ENCODE measurements at regions of chr17 and their contacts with region 1.

Region 1: GRCh38 chr17:79231766-79232287 is 157.2 kb downstream of the ENGASE start:
- DNase-seq: no peak
- ATAC-seq: no peak
- H3K4me3 ChIP-seq: no peak overlapping the region
- H3K27ac ChIP-seq: no peak overlapping the region
- H3K4me1 ChIP-seq: no peaks in the 10 kb centered on the region
- H3K27me3 ChIP-seq: peaks cover 4% of the 10 kb centered on the region; the same call in 1 of the 2 replicates
- CTCF ChIP-seq: no peak

Region 2: DNA sequence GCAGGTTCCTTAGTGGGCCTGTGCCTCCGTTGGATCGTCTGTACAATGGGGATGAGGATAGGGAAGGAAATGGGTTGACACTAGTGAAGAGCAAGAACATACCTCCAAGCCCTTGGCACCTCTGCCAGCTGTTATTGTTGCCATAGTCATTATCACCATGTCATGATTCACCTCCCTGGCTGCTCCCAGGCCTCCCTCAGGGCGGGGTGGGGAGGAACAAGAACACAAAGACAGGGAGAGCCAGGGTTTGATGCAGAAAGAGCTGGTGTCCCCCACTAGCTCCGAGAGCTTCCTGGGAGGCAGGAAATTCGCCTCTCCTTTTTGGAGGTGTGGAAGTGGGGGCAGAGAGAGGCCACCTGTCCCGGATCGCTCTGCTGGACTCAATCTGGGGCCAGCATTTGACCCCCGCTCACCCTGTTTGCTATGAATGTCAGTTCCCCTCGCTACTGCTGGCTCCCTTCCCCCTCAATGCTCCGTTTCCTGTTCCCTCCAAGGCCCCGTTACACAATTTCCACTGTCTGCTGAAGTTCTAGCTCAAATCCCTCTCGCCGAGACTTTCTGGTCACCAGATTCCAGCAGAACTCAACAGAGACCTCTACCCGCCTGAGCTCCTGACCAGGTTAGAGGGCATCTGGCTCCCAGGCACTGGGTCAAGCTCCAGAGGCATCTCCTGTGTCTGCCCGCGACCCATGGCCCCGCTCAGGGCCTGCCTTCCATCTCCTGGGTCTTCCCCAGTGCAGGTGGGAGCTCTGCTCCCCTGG is 315.8 kb before region 1 on chr17:
- CTCF ChIA-PET with region 1: no interaction called
- POLR2A ChIA-PET with region 1: no interaction called
- in situ Hi-C with region 1: no loop called
- intact Hi-C with region 1: no loop called
- DNase-seq: no peak
- ATAC-seq: peak; percentile 62
- H3K4me3 ChIP-seq: no peak overlapping the region
- H3K27ac ChIP-seq: no peak overlapping the region
- H3K4me1 ChIP-seq: peaks cover 6% of the 10 kb centered on the region; the same call in 1 of the 2 replicates
- H3K27me3 ChIP-seq: no peaks in the 10 kb centered on the region
- CTCF ChIP-seq: no peak

Region 3: DNA sequence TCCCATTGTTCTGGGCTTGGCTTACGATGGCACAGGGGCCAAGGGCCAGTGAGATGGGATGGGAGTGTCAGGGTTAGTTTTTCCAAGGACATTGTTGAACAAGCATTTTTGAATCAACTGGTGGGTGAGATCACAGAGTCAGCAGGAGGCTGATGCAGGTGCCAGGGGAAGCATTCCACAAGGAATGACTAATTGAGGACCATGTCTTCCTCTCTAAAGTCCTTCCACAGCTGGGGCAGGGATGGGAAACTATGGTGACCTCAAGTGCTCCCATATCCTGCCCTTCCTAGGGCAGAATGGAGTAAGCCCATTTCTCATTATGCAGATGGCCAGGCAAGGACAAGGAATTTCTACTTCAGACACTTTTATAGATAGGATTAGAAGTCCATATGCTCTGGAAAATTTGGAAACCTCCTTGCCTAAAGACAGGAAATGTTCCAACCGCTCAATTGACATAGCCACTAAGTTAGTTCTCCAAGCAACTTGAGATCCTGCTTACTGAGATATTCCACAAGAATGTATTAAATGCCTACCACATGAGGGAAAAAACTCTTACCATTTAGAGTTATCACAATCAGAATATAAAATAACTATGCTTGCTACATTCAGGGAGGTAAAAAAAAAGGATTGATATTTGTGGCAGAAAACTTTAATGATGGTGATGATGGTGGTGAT is 178.4 kb before region 1 on chr17:
- CTCF ChIA-PET with region 1: no interaction called
- POLR2A ChIA-PET with region 1: no interaction called
- in situ Hi-C with region 1: no loop called
- intact Hi-C with region 1: no loop called
- DNase-seq: no peak
- ATAC-seq: no peak
- H3K4me3 ChIP-seq: no peak overlapping the region
- H3K27ac ChIP-seq: no peak overlapping the region
- H3K4me1 ChIP-seq: no peaks in the 10 kb centered on the region
- H3K27me3 ChIP-seq: no peaks in the 10 kb centered on the region
- CTCF ChIP-seq: no peak

Region 4: DNA sequence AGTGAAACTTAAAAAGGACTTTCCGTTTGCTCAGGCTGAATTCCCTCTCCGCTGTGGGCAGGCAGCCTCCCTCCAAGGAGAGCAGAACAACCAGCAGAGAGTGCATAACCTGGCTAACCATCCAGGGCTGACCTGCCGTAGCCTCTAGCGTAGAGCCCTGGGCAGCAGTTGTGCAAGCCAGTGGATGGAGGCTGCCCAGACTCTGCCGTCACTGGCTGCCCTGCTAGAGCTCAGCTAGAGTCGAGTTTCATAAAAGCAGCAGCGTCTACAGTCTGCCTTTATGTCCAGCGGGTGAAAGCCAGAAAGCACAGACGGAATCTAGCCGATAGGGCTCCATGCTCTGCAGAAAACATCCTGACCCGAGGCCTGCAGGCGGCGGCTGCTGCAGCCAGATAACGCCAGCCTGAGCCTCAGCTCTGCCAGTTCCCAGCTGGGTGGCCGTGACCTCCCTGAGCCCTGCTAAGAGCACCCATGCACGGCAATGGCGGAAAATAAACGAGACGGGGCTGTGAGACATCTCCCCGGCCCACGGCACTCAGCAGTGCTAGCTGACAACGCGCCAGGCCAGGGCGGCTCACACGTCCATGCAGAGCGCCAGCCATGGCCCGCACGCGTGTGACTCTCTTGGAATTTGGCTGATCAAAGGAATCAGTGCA is 74.1 kb after region 1 on chr17:
- CTCF ChIA-PET with region 1: no interaction called
- POLR2A ChIA-PET with region 1: no interaction called
- in situ Hi-C with region 1: no loop called
- intact Hi-C with region 1: no loop called
- DNase-seq: no peak
- ATAC-seq: no peak; the same call in 1 of the 2 replicates
- H3K4me3 ChIP-seq: no peak overlapping the region
- H3K27ac ChIP-seq: no peak overlapping the region
- H3K4me1 ChIP-seq: no peaks in the 10 kb centered on the region
- H3K27me3 ChIP-seq: no peaks in the 10 kb centered on the region; the same call in none of the 2 replicates
- CTCF ChIP-seq: no peak

Region 5: DNA sequence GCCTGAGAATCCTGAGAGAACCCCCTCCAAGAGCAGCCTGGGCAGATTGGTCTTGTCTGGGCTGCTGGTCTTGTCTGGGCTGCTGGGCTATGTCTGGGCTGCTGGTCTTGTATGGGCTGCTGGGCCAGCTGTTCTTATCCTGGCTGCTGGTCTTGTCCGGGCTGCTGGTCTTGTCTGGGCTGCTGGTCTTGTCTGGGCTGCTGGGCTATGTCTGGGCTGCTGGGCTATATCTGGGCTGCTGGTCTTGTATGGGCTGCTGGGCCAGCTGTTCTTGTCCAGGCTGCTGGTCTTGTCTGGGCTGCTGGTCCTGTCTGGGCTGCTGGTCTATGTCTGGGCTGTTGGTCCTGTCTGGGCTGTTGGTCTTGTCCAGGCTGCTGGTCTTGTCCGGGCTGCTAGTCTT is 87.6 kb after region 1 on chr17:
- CTCF ChIA-PET with region 1: no interaction called
- POLR2A ChIA-PET with region 1: no interaction called
- in situ Hi-C with region 1: no loop called
- intact Hi-C with region 1: no loop called
- DNase-seq: no peak
- ATAC-seq: peak; percentile 31; the same call in 1 of the 2 replicates
- H3K4me3 ChIP-seq: no peak overlapping the region
- H3K27ac ChIP-seq: no peak overlapping the region
- H3K4me1 ChIP-seq: no peaks in the 10 kb centered on the region
- H3K27me3 ChIP-seq: peaks cover 43% of the 10 kb centered on the region
- CTCF ChIP-seq: no peak

Region 6: GRCh38 chr17:79330696-79331095 is 98.9 kb after region 1 on chr17:
- CTCF ChIA-PET with region 1: interaction called, 18 read pairs
- POLR2A ChIA-PET with region 1: no interaction called
- in situ Hi-C with region 1: no loop called
- intact Hi-C with region 1: no loop called
- DNase-seq: no peak
- ATAC-seq: no peak
- H3K4me3 ChIP-seq: no peak overlapping the region
- H3K27ac ChIP-seq: no peak overlapping the region
- H3K4me1 ChIP-seq: no peaks in the 10 kb centered on the region
- H3K27me3 ChIP-seq: peaks cover 55% of the 10 kb centered on the region
- CTCF ChIP-seq: no peak

Measured in Panc1 (cell line).